Ovary (tissue), 10 donors: ENCODE measurements at regions of chr16 and their contacts with region 1.

Region 1: DNA sequence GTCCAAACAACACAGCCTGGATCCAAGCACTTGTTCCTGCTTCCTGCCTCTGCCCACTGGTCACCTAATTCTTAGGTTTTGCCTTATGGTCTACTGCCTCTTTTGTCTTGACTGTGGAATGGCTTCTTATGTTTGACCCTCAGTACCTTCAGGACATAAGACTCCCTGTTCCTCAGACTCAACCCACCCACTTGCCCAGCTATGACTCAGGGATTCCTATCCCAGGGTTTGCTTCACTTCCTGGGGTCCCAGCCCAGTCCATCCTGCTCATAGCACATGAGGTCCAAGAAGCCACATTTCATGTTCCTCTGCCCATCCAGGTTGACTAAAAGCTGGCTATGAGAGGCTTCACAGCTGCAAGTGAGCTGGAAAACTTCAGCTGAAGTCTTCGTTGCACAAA is 320.9 kb upstream of the CDH5 start:
- DNase-seq: no peak
- H3K4me3 ChIP-seq: no peak overlapping the region
- H3K27ac ChIP-seq: no peak overlapping the region
- H3K4me1 ChIP-seq: no peaks in the 10 kb centered on the region
- H3K27me3 ChIP-seq: no peaks in the 10 kb centered on the region
- CTCF ChIP-seq: no peak
- EP300 ChIP-seq: no peak
- POLR2A ChIP-seq: no peak

Region 2: DNA sequence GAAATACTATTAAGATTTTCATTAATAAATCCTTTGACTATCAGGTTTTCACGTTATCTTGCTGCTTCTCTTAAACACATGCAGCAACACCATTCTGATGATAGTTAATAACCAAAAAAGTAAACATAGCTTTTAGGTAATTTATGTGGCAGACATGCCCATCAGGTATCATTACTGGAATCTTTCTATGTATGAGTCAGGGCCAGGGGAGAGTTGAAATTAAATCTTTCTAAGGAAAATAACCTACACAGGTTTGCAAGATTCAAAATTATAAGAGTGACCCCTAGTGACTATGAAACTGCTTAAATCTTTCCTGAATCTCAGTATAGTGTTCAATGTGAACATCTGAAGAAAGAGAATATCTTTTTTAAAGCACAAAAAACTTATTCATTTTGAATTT is 1590.4 kb before region 1 on chr16:
- intact Hi-C with region 1: no loop called
- DNase-seq: no peak
- H3K4me3 ChIP-seq: no peak overlapping the region
- H3K27ac ChIP-seq: no peak overlapping the region
- H3K4me1 ChIP-seq: peaks cover 2% of the 10 kb centered on the region
- H3K27me3 ChIP-seq: no peaks in the 10 kb centered on the region
- CTCF ChIP-seq: no peak
- EP300 ChIP-seq: no peak
- POLR2A ChIP-seq: no peak

Region 3: GRCh38 chr16:66079671-66080334 is 34.2 kb after region 1 on chr16:
- intact Hi-C with region 1: loop called in 1 of 4 experiments (anchors 1 kb)
- DNase-seq: no peak
- H3K4me3 ChIP-seq: no peak overlapping the region
- H3K27ac ChIP-seq: no peak overlapping the region
- H3K4me1 ChIP-seq: no peaks in the 10 kb centered on the region
- H3K27me3 ChIP-seq: no peaks in the 10 kb centered on the region
- CTCF ChIP-seq: no peak
- EP300 ChIP-seq: no peak
- POLR2A ChIP-seq: no peak

Region 4: GRCh38 chr16:66107661-66108060 is 62.0 kb after region 1 on chr16:
- intact Hi-C with region 1: no loop called
- DNase-seq: no peak
- H3K4me3 ChIP-seq: no peak overlapping the region
- H3K27ac ChIP-seq: no peak overlapping the region
- H3K4me1 ChIP-seq: peaks cover 2% of the 10 kb centered on the region
- H3K27me3 ChIP-seq: no peaks in the 10 kb centered on the region
- CTCF ChIP-seq: no peak
- EP300 ChIP-seq: no peak
- POLR2A ChIP-seq: no peak